PC-3 (cell line): ENCODE measurements at regions of chr20 and their contacts with region 1.

Region 1: GRCh38 chr20:58078741-58079522 is 149.5 kb downstream of the ANKRD60 start:
- DNase-seq: peak; percentile 93
- ATAC-seq: peak; percentile 73
- H3K4me3 ChIP-seq: no peak overlapping the region
- H3K27ac ChIP-seq: peak overlapping the region; percentile 89
- H3K4me1 ChIP-seq: peaks cover 50% of the 10 kb centered on the region
- H3K27me3 ChIP-seq: no peaks in the 10 kb centered on the region
- CTCF ChIP-seq: no peak

Region 2: GRCh38 chr20:57991211-57991881 is 87.6 kb before region 1 on chr20:
- CTCF ChIA-PET with region 1: no interaction called
- POLR2A ChIA-PET with region 1: interaction called, 12 read pairs
- intact Hi-C with region 1: loop called (anchors 5 kb)
- DNase-seq: peak; percentile 97
- ATAC-seq: peak; percentile 84
- H3K4me3 ChIP-seq: no peak overlapping the region
- H3K27ac ChIP-seq: peak overlapping the region; percentile 95
- H3K4me1 ChIP-seq: peaks cover 66% of the 10 kb centered on the region
- H3K27me3 ChIP-seq: no peaks in the 10 kb centered on the region
- CTCF ChIP-seq: no peak

Region 3: GRCh38 chr20:58017237-58017969 is 61.5 kb before region 1 on chr20:
- CTCF ChIA-PET with region 1: no interaction called
- POLR2A ChIA-PET with region 1: no interaction called
- intact Hi-C with region 1: loop called (anchors 5 kb)
- DNase-seq: peak; percentile 98
- ATAC-seq: peak; percentile 88
- H3K4me3 ChIP-seq: peak overlapping the region; percentile 42; the same call in 1 of the 2 replicates
- H3K27ac ChIP-seq: peak overlapping the region; percentile 97
- H3K4me1 ChIP-seq: peaks cover 58% of the 10 kb centered on the region
- H3K27me3 ChIP-seq: no peaks in the 10 kb centered on the region
- CTCF ChIP-seq: no peak

Region 4: GRCh38 chr20:58053391-58054055 is 25.4 kb before region 1 on chr20:
- CTCF ChIA-PET with region 1: no interaction called
- POLR2A ChIA-PET with region 1: no interaction called
- intact Hi-C with region 1: loop called (anchors 2 kb)
- DNase-seq: no peak
- ATAC-seq: no peak
- H3K4me3 ChIP-seq: no peak overlapping the region
- H3K27ac ChIP-seq: no peak overlapping the region
- H3K4me1 ChIP-seq: 0 out of 2 replicates have a peak, but pooled peaks cover 4% of the 10 kb centered on the region
- H3K27me3 ChIP-seq: no peaks in the 10 kb centered on the region
- CTCF ChIP-seq: no peak

Region 5: DNA sequence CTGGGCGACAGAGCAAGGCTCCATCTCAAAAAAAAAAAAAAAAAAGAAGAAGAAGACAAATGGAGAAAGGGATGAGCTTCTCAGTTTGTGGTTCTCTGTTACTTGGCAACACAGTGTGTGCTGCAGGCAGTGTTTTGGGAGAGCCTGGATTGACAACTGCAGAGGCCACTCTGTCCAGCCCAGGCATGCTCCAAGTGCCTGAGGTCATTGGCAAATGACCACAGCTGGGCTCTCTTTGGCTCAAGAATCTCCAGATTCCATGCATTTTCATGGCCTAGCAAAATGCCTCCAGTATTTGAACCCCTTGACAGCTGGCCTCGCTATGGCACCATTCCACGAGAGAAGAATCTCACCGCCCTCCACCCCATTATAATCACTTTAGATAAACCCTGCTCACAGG is 23.3 kb after region 1 on chr20:
- CTCF ChIA-PET with region 1: no interaction called
- POLR2A ChIA-PET with region 1: no interaction called
- intact Hi-C with region 1: no loop called
- DNase-seq: no peak
- ATAC-seq: no peak
- H3K4me3 ChIP-seq: no peak overlapping the region
- H3K27ac ChIP-seq: 0 out of 2 replicates have a peak overlapping the region, but pooled peaks have one; percentile 2
- H3K4me1 ChIP-seq: peaks cover 12% of the 10 kb centered on the region
- H3K27me3 ChIP-seq: no peaks in the 10 kb centered on the region
- CTCF ChIP-seq: no peak

Region 6: GRCh38 chr20:58149437-58150105 is 70.6 kb after region 1 on chr20:
- CTCF ChIA-PET with region 1: no interaction called
- POLR2A ChIA-PET with region 1: interaction called, 14 read pairs
- intact Hi-C with region 1: no loop called
- DNase-seq: peak; percentile 80
- ATAC-seq: peak; percentile 61
- H3K4me3 ChIP-seq: no peak overlapping the region
- H3K27ac ChIP-seq: no peak overlapping the region
- H3K4me1 ChIP-seq: peaks cover 9% of the 10 kb centered on the region
- H3K27me3 ChIP-seq: 0 out of 2 replicates have a peak, but pooled peaks cover 5% of the 10 kb centered on the region
- CTCF ChIP-seq: no peak